ENCODE measurements at regions of chr9 and their contacts with region 1.

Region 1: DNA sequence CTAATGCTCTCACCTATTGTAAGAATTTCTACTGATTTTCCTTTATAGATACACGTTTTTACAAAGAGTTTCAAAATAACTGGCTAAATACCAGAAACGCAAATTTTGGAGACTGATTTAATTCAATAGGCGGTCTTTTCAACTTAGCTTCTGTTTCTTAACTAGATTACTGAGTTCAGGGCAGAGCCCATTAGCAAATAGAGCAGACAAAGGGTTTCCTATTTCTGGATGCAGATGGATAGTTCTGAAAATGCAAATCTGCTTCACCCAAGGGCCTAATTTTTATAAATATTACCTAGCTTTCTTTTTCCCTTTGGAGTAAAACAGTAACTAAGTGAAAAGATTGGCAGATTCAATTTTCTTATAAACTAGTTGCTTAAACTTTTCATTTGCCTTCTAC is 13.6 kb upstream of the KIAA1958 start:
- DNase-seq: no peak
- CTCF ChIP-seq: no peak

Region 2: GRCh38 chr9:112485574-112485973 is 12.6 kb after region 1 on chr9:
- CTCF ChIA-PET with region 1: interaction called, 28 read pairs
- POLR2A ChIA-PET with region 1: no interaction called
- DNase-seq: no peak
- CTCF ChIP-seq: no peak

Region 3: DNA sequence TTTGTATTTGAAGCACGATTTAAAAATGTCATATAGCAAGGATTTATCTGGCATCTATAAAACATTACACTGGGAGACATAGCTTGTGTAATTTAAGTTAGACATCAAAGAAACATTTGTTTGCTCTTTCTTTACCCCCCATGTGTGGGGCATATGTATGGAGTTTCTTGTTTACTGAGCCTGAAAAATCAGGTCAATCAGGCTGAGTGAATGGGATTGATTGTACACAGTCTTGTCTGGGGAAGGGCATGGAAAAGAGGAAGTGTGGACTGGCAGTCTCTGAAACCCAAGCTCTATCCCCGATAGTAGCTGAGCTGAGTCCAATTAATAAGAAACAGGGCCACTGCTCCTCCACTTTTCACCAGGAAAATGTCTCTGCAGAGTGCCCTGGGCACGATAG is 368.3 kb after region 1 on chr9:
- CTCF ChIA-PET with region 1: no interaction called
- POLR2A ChIA-PET with region 1: no interaction called
- DNase-seq: no peak
- CTCF ChIP-seq: no peak